ENCODE measurements at regions of chr14 and their contacts with region 1.

Region 1: DNA sequence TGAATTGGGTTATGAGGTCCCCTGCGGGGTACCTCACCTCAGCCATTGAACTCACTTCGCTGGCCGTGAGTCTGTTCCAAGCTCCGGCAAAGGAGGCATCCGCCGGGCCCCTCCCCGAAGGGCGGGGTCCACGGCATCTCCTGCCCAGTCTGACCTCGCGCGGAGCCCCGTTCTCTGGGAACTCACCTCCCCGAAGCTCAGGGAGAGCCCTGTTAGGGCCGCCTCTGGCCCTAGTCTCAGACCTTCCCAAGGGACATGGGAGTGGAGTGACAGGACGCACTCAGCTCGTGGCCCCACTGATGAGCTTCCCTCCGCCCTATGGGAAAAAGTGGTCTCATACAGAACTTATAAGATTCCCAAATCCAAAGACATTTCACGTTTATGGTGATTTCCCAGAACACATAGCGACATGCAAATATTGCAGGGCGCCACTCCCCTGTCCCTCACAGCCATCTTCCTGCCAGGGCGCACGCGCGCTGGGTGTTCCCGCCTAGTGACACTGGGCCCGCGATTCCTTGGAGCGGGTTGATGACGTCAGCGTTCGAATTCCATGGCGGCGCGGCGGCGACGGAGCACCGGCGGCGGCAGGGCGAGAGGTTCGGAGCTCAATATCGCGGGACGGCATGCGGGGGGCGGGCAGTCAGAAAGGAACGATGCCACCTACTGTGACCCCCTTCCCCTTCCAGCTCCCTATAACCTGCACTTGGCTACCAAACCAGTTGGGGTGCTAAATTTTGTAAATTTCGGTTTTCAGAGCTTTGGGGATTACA is at the start of gene PARP2:
- DNase-seq: peak; percentile 97
- H3K4me3 Mint-ChIP-seq: peak within 1 kb of the TSS; percentile 93
- H3K27ac Mint-ChIP-seq: peak within 1 kb of the TSS; percentile 94
- H3K4me1 Mint-ChIP-seq: peaks cover 19% of the 10 kb centered on the region
- H3K27me3 Mint-ChIP-seq: peaks cover 3% of the 10 kb centered on the region
- total RNA-seq, gene PARP2: 46.3 to 47.3 TPM

Region 2: DNA sequence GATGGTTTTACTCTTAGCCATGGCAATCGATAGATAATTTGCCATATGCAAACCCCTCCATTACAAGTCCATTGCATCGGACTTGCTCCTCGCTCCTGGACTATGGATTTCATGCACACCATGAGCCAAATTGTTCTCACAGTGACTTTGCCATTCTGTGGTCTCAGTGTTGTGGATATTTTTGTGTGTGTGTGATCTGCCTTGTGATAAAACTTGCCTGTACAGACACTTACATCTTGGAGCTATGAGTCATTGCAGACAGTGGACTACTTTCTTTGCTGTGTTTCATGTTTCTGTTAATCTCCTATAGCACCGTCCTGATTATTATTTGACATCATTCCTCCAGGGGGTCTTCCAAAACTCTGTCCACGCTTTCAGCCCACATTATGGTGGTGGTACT is 299.0 kb before region 1 on chr14:
- CTCF ChIA-PET with region 1: no interaction called
- POLR2A ChIA-PET with region 1: no interaction called
- intact Hi-C with region 1: no loop called
- DNase-seq: no peak
- H3K4me3 Mint-ChIP-seq: no peak overlapping the region
- H3K27ac Mint-ChIP-seq: no peak overlapping the region
- H3K4me1 Mint-ChIP-seq: no peaks in the 10 kb centered on the region
- H3K27me3 Mint-ChIP-seq: peaks cover 7% of the 10 kb centered on the region

Region 3: DNA sequence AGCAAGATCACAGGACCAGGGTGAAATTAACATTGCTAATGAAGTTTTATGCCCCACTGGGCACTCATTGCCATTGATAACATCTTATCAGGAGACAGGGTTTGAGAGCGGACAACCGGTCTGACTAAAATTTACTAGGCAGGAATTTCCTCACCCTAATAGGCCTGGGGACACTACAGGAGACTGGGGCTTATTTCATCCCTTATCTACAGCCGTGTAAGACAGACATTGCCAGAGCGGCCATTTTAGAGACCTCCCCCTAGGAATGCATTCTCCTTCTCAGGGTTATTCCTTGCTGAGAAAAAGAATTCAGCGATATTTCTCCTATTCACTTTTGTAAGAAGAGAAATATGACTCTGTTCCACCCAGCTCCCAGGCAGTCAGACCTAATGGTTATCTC is 224.5 kb before region 1 on chr14:
- CTCF ChIA-PET with region 1: no interaction called
- POLR2A ChIA-PET with region 1: no interaction called
- intact Hi-C with region 1: no loop called
- DNase-seq: no peak
- H3K4me3 Mint-ChIP-seq: no peak overlapping the region
- H3K27ac Mint-ChIP-seq: no peak overlapping the region
- H3K4me1 Mint-ChIP-seq: no peaks in the 10 kb centered on the region
- H3K27me3 Mint-ChIP-seq: peaks cover 8% of the 10 kb centered on the region

Region 4: GRCh38 chr14:20327005-20327869 is 16.0 kb before region 1 on chr14:
- CTCF ChIA-PET with region 1: interaction called, 129 read pairs
- POLR2A ChIA-PET with region 1: interaction called, 59 read pairs
- intact Hi-C with region 1: loop called (anchors 2 kb)
- DNase-seq: no peak
- H3K4me3 Mint-ChIP-seq: peak overlapping the region; percentile 0
- H3K27ac Mint-ChIP-seq: peak overlapping the region; percentile 43
- H3K4me1 Mint-ChIP-seq: peaks cover 40% of the 10 kb centered on the region
- H3K27me3 Mint-ChIP-seq: no peaks in the 10 kb centered on the region

Region 5: DNA sequence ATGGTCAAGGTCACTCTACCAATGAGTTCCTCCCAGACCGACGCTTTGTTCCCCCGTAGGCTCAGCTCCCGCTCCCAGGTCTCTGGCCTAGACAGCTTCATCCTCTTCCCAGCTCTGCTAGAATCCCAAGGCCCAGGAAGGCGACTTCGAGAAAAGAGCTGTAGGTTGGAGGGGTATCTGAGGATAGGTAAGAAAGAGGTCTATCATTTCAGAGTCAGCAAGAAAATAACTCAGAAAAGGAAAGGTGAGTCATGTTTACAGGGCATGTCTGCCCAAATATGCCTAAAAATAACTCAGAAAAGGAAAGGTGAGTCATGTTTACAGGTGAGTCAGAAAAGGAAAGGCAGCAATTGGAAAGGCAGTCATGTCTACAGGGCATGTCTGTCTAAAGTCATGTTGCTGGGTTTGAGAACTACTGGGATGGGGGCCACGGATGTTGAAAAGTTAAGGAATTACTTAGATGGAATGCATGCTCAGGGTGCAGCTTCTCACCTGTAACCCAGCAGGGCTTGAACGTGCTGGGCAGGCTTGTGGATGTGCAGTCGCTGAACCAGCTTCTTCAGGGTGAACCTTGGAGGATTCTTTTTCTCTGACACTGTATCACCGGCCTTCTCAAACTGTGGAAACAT is 57.8 kb after region 1 on chr14:
- CTCF ChIA-PET with region 1: no interaction called
- POLR2A ChIA-PET with region 1: interaction called, 26 read pairs
- intact Hi-C with region 1: loop called (anchors 1 kb)
- DNase-seq: peak; percentile 43
- H3K4me3 Mint-ChIP-seq: peak overlapping the region; percentile 52
- H3K27ac Mint-ChIP-seq: peak overlapping the region; percentile 95
- H3K4me1 Mint-ChIP-seq: peaks cover 30% of the 10 kb centered on the region
- H3K27me3 Mint-ChIP-seq: no peaks in the 10 kb centered on the region

Region 6: GRCh38 chr14:20461274-20462001 is 118.2 kb after region 1 on chr14 and contains the start of gene PIP4P1:
- CTCF ChIA-PET with region 1: interaction called, 6 read pairs
- POLR2A ChIA-PET with region 1: interaction called, 42 read pairs
- intact Hi-C with region 1: loop called (anchors 1 kb)
- DNase-seq: peak; percentile 99
- H3K4me3 Mint-ChIP-seq: peak within 1 kb of the TSS; percentile 91
- H3K27ac Mint-ChIP-seq: peak within 1 kb of the TSS; percentile 93
- H3K4me1 Mint-ChIP-seq: peaks cover 33% of the 10 kb centered on the region
- H3K27me3 Mint-ChIP-seq: no peaks in the 10 kb centered on the region
- total RNA-seq, gene PIP4P1: 31.1 to 35.2 TPM

Measured in activated CD4-positive, alpha-beta memory T cell treated with anti-CD3 and anti-CD28 coated beads for 36 hours (primary cell).